ENCODE measurements at regions of chr12 and their contacts with region 1.

Region 1: DNA sequence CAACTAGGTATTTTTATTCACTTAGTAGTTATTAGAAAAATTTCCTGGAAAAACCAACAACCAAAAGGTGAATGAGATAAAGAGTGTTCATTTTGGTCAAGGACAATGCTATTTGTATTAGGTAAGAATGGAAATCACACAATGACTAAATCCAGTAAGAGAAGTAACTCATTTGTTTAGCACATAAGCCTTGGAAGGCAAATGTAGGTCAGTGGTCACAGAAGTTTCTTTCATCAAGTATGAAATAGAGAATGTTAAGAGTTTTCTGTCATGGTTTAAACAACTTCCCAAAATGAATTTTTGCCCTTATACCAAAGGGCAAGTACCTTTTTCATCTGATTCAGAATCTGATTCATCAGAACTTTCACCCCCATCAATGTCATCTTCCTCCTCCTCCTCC is 101.7 kb downstream of the KIF21A start:
- DNase-seq: no peak

Region 2: GRCh38 chr12:38823739-38824138 is 517.4 kb before region 1 on chr12:
- intact Hi-C with region 1: no loop called
- DNase-seq: no peak

Region 3: GRCh38 chr12:39392154-39392925 is 51.2 kb after region 1 on chr12:
- intact Hi-C with region 1: loop called (anchors 10 kb)
- DNase-seq: no peak

Measured in posterior cingulate gyrus (tissue), 11 donors.